ENCODE measurements at regions of chr1 and their contacts with region 1.

Region 1: GRCh38 chr1:84506002-84506728 is at the starts of genes GNG5 and SPATA1:
- DNase-seq: peak; percentile 98
- H3K4me3 ChIP-seq: peak within 1 kb of the TSS; percentile 71 to 81
- H3K27ac ChIP-seq: peak within 1 kb of the TSS; percentile 94 to 99
- H3K4me1 ChIP-seq: peaks cover 8 to 19% of the 10 kb centered on the region in 2 experiments; a peak in 3 of 4 replicates
- H3K27me3 ChIP-seq: no peaks in the 10 kb centered on the region
- CTCF ChIP-seq: no peak
- EP300 ChIP-seq: no peak
- RAD21 ChIP-seq: no peak
- polyA plus RNA-seq, gene GNG5: 67.0 and 104 TPM in 2 replicates
- polyA plus RNA-seq, gene SPATA1: 1.2 and 1.6 TPM in 2 replicates

Region 2: GRCh38 chr1:84286071-84286470 is 220.1 kb before region 1 on chr1:
- CTCF ChIA-PET with region 1: no interaction called
- POLR2A ChIA-PET with region 1: no interaction called
- DNase-seq: no peak
- H3K4me3 ChIP-seq: no peak overlapping the region
- H3K27ac ChIP-seq: no peak overlapping the region
- H3K4me1 ChIP-seq: no peaks in the 10 kb centered on the region
- H3K27me3 ChIP-seq: no peaks in the 10 kb centered on the region
- CTCF ChIP-seq: no peak
- EP300 ChIP-seq: no peak
- RAD21 ChIP-seq: no peak

Region 3: GRCh38 chr1:84319662-84320061 is 186.5 kb before region 1 on chr1:
- CTCF ChIA-PET with region 1: no interaction called
- POLR2A ChIA-PET with region 1: no interaction called
- DNase-seq: no peak
- H3K4me3 ChIP-seq: no peak overlapping the region
- H3K27ac ChIP-seq: no peak overlapping the region
- H3K4me1 ChIP-seq: no peaks in the 10 kb centered on the region
- H3K27me3 ChIP-seq: no peaks in the 10 kb centered on the region
- CTCF ChIP-seq: no peak
- EP300 ChIP-seq: no peak
- RAD21 ChIP-seq: no peak

Region 4: DNA sequence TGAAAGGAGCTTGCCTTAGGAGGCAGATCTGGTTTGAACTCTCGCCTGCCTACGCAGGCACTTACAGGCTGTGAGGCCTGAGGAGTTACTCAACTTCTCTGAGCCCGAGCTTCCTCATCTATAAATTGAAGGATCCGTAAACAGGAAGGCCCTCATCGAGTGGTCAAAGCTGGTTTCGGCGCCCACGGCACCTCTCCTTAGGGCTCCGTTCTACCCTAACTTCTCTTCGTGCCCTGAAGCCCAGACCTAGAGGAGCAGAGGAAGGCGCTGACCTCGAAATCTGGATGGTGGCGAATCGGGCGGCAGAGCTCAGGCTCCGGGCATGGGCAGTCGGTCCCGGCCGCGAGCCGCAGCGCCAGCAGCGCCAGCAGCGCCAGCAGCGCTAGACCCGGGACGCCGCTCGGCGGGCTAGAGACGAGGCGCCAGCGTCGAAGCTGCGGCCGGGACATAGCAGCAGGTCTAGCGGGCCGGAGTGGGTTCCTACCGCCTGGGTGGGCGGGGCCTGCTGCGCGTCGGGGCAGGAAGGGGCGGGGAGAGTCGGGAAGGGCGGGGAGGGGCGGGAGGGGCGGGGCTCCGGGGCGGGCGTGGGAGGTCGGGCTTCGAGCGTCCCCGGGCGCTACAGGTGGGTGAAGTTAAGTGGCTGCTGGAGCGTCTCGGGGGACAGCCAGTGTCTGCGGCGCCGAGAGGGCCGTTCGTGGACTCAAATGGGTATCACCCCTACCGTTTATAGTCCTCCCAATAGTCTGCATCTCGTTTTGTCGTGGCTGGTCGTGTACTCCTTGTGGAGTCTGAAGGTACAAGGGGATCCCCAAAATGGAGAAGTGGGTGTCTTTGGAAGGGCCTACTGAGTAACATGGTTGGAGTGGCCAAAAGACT is 68.0 kb after region 1 on chr1 and contains the start of gene CTBS:
- CTCF ChIA-PET with region 1: no interaction called
- POLR2A ChIA-PET with region 1: interaction called, 12 read pairs
- DNase-seq: peak; percentile 99
- H3K4me3 ChIP-seq: peak within 1 kb of the TSS; percentile 78 to 79
- H3K27ac ChIP-seq: peak within 1 kb of the TSS; percentile 93
- H3K4me1 ChIP-seq: peaks cover 6 to 14% of the 10 kb centered on the region in 2 experiments; a peak in 3 of 4 replicates
- H3K27me3 ChIP-seq: no peaks in the 10 kb centered on the region
- CTCF ChIP-seq: no peak
- EP300 ChIP-seq: no peak
- RAD21 ChIP-seq: no peak
- polyA plus RNA-seq, gene CTBS: 16.6 and 23.4 TPM in 2 replicates

Region 5: GRCh38 chr1:84892705-84893618 is 386.8 kb after region 1 on chr1 and contains the start of gene LPAR3:
- CTCF ChIA-PET with region 1: no interaction called
- POLR2A ChIA-PET with region 1: no interaction called
- DNase-seq: peak; percentile 88
- H3K4me3 ChIP-seq: peak within 1 kb of the TSS in 1 of 2 experiments; percentile 35; a peak in 2 of 4 replicates
- H3K27ac ChIP-seq: no peak within 1 kb of the TSS
- H3K4me1 ChIP-seq: peaks cover 0 to 6% of the 10 kb centered on the region in 2 experiments; a peak in 1 of 4 replicates
- H3K27me3 ChIP-seq: peaks cover 21% of the 10 kb centered on the region
- CTCF ChIP-seq: no peak
- EP300 ChIP-seq: no peak
- RAD21 ChIP-seq: no peak
- polyA plus RNA-seq, gene LPAR3: 0.08 and 0.11 TPM in 2 replicates